Colonic mucosa (tissue), 4 donors: ENCODE measurements at regions of chr18 and their contacts with region 1.

Region 1: GRCh38 chr18:54444319-54444914 is 86.7 kb downstream of the C18orf54 start:
- DNase-seq: peak; percentile 69
- H3K4me3 ChIP-seq: no peak overlapping the region
- H3K27ac ChIP-seq: no peak overlapping the region
- H3K4me1 ChIP-seq: no peaks in the 10 kb centered on the region
- H3K27me3 ChIP-seq: no peaks in the 10 kb centered on the region
- CTCF ChIP-seq: peak; percentile 74

Region 2: GRCh38 chr18:54100920-54101470 is 343.4 kb before region 1 on chr18:
- intact Hi-C with region 1: no loop called
- DNase-seq: no peak
- H3K4me3 ChIP-seq: no peak overlapping the region
- H3K27ac ChIP-seq: no peak overlapping the region
- H3K4me1 ChIP-seq: no peaks in the 10 kb centered on the region
- H3K27me3 ChIP-seq: no peaks in the 10 kb centered on the region
- CTCF ChIP-seq: no peak

Region 3: DNA sequence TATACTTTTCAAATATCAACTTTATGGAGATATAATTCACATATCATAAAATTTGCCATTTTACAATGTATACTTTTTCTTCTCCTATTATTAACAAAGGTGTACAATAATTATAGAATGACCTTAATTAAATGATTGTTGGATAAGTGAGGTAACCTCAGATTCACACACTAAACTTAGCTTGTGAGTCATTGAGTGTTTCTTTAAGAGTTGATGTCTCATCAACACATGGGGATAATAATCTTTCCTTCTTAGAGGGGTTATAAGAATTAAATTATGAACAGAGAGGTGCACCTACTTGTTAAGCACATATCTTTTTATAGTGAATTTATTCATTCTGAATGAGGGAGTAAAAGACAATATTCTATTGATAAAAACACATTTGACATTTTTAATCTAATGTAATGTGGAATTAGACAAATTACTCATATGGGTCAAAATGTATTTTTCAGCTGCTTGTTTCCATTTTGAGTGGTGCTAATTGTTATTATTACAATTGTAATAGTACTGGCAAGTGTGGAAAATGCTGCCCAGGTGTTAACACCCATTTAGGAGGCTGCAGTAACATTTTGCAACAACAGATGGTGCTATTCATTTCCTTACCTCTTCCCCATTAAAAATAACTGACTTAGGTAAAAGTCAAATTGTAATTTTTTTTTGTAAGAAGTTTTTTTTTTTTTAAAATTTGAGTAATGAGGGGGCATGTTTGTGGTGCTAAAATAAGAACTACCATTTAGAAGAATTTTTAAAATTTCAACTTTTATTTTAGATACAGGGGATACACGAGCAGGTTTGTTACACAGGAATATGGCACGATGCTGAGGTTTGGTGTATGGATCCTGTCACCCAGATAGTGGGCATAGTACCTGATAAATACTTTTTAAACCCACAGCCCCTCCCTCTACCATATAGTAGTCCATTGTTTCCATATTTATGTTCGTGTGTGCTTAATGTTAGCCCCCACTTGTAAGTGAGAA is 114.5 kb after region 1 on chr18:
- intact Hi-C with region 1: loop called (anchors 5 kb)
- DNase-seq: peak; percentile 26
- H3K4me3 ChIP-seq: no peak overlapping the region
- H3K27ac ChIP-seq: no peak overlapping the region
- H3K4me1 ChIP-seq: no peaks in the 10 kb centered on the region
- H3K27me3 ChIP-seq: no peaks in the 10 kb centered on the region
- CTCF ChIP-seq: peak; percentile 83

Region 4: GRCh38 chr18:54647176-54647575 is 202.8 kb after region 1 on chr18:
- intact Hi-C with region 1: loop called (anchors 10 kb)
- DNase-seq: peak; percentile 36
- H3K4me3 ChIP-seq: no peak overlapping the region
- H3K27ac ChIP-seq: no peak overlapping the region
- H3K4me1 ChIP-seq: no peaks in the 10 kb centered on the region
- H3K27me3 ChIP-seq: no peaks in the 10 kb centered on the region
- CTCF ChIP-seq: no peak

Region 5: GRCh38 chr18:54679318-54680149 is 235.1 kb after region 1 on chr18:
- intact Hi-C with region 1: loop called (anchors 10 kb)
- DNase-seq: peak; percentile 25
- H3K4me3 ChIP-seq: no peak overlapping the region
- H3K27ac ChIP-seq: no peak overlapping the region
- H3K4me1 ChIP-seq: no peaks in the 10 kb centered on the region
- H3K27me3 ChIP-seq: no peaks in the 10 kb centered on the region
- CTCF ChIP-seq: peak; percentile 38

Region 6: GRCh38 chr18:54983041-54983686 is 538.7 kb after region 1 on chr18:
- intact Hi-C with region 1: loop called (anchors 5 kb)
- DNase-seq: no peak
- H3K4me3 ChIP-seq: no peak overlapping the region
- H3K27ac ChIP-seq: no peak overlapping the region
- H3K4me1 ChIP-seq: no peaks in the 10 kb centered on the region
- H3K27me3 ChIP-seq: no peaks in the 10 kb centered on the region
- CTCF ChIP-seq: peak; percentile 73